ENCODE measurements at regions of chr5 and their contacts with region 1.

Region 1: DNA sequence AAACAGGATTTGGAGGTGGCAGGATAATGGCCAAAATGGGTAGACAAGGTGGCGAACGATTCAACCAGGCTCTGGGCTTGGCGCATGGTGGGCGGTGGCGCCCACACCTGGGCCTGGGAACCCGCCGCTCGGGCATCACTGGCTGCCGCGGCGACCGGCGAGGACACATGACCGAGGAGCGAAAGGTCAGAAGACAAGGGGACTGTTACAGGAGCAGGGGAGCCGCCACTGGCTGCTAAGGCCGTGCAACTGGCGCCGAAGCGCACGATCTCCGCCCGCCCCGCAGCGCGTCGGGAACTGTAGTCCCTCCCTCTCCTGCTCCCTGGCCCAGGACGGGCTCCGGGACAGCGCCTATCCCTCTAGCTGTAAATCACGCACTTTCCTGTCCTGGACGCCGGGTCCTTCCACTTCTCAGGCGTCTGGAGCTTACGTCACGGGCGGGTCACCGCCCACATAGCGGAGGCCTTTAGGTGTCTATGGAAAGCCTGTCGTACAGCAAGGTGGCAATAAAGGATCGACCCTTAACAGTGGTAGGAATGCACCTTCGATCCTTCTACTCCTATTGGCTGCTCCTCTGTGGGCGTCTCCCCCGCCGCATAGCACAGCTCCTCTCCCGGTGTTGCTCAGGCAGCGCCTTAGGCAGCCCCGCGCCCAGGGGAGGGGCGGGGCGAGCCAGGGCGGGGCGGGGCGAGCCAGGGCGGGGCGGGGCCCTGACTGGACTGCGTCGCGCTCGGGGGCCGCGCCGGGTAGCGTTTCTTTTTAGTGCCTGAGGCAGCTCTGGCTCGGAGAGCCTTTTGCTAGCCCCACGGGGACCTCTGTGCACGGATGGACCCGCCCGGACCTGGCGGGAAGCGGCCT is at the start of gene ICE1:
- DNase-seq: peak; percentile 97 to 99
- ATAC-seq: peak; percentile 96 to 97
- H3K4me3 ChIP-seq: peak within 1 kb of the TSS; percentile 66 to 99 (median 84)
- H3K27ac ChIP-seq: peak within 1 kb of the TSS; percentile 89 to 99 (median 94)
- H3K4me1 ChIP-seq: peaks cover 34 to 44% of the 10 kb centered on the region in 2 donors
- H3K27me3 ChIP-seq: no peaks in the 10 kb centered on the region
- CTCF ChIP-seq: peak in 1 of 5 experiments; percentile 8
- POLR2A ChIP-seq: peak; percentile 39 to 66
- total RNA-seq, gene ICE1: 24.9 to 34.7 (median 32.7) TPM

Region 2: GRCh38 chr5:4879693-4880303 is 542.4 kb before region 1 on chr5:
- in situ Hi-C with region 1: loop called in 3 of 4 experiments (anchors 25 kb)
- intact Hi-C with region 1: no loop called
- DNase-seq: peak; percentile 38 to 67
- ATAC-seq: peak; percentile 78 to 93
- H3K4me3 ChIP-seq: no peak overlapping the region
- H3K27ac ChIP-seq: no peak overlapping the region
- H3K4me1 ChIP-seq: no peaks in the 10 kb centered on the region
- H3K27me3 ChIP-seq: no peaks in the 10 kb centered on the region
- CTCF ChIP-seq: peak; percentile 70 to 91 (median 80)
- POLR2A ChIP-seq: no peak

Region 3: GRCh38 chr5:4924577-4924976 is 497.6 kb before region 1 on chr5:
- in situ Hi-C with region 1: no loop called
- intact Hi-C with region 1: no loop called
- DNase-seq: no peak
- ATAC-seq: no peak
- H3K4me3 ChIP-seq: no peak overlapping the region
- H3K27ac ChIP-seq: no peak overlapping the region
- H3K4me1 ChIP-seq: no peaks in the 10 kb centered on the region
- H3K27me3 ChIP-seq: no peaks in the 10 kb centered on the region
- CTCF ChIP-seq: no peak
- POLR2A ChIP-seq: no peak

Region 4: GRCh38 chr5:5340206-5340729 is 81.9 kb before region 1 on chr5:
- in situ Hi-C with region 1: no loop called
- intact Hi-C with region 1: loop called (anchors 2 kb)
- DNase-seq: peak; percentile 68 to 89
- ATAC-seq: peak; percentile 98 to 99
- H3K4me3 ChIP-seq: peak overlapping the region in 3 of 4 donors; percentile 6 to 16 (median 7)
- H3K27ac ChIP-seq: peak overlapping the region; percentile 71 to 80 (median 76)
- H3K4me1 ChIP-seq: peaks cover 11 to 13% of the 10 kb centered on the region in 2 donors
- H3K27me3 ChIP-seq: no peaks in the 10 kb centered on the region
- CTCF ChIP-seq: peak; percentile 45 to 62 (median 51)
- POLR2A ChIP-seq: no peak

Region 5: GRCh38 chr5:5481206-5481605 is 59.0 kb after region 1 on chr5:
- in situ Hi-C with region 1: no loop called
- intact Hi-C with region 1: loop called (anchors 2 kb)
- DNase-seq: peak in 1 of 2 donors; percentile 23
- ATAC-seq: peak; percentile 55 to 83
- H3K4me3 ChIP-seq: peak overlapping the region in 1 of 4 donors; percentile 20
- H3K27ac ChIP-seq: peak overlapping the region; percentile 71 to 85 (median 84)
- H3K4me1 ChIP-seq: peaks cover 23 to 28% of the 10 kb centered on the region in 2 donors
- H3K27me3 ChIP-seq: no peaks in the 10 kb centered on the region
- CTCF ChIP-seq: no peak
- POLR2A ChIP-seq: no peak

Region 6: DNA sequence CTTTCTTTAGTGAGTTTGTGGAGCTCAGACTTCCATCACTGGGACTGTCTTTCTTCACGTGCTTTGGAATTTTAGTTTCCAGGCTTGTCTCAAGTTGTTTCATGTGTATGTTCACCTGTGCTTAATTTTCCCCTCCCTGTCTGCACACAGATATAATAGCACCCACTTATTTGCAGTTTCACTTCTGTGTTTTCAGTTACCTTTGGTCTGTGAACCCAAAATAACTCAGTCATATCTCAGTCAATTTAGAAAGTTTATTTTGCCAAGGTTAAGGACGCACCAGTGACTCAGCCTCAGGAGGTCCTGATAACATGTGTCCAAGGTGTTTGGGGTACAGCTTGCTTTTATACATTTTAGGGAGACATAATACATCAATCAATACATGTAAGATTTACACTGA is 330.7 kb after region 1 on chr5:
- in situ Hi-C with region 1: no loop called
- intact Hi-C with region 1: no loop called
- DNase-seq: no peak
- ATAC-seq: no peak
- H3K4me3 ChIP-seq: no peak overlapping the region
- H3K27ac ChIP-seq: no peak overlapping the region
- H3K4me1 ChIP-seq: no peaks in the 10 kb centered on the region
- H3K27me3 ChIP-seq: no peaks in the 10 kb centered on the region
- CTCF ChIP-seq: no peak
- POLR2A ChIP-seq: no peak